Gastrocnemius medialis (tissue), 4 donors: ENCODE measurements at regions of chr5 and their contacts with region 1.

Region 1: DNA sequence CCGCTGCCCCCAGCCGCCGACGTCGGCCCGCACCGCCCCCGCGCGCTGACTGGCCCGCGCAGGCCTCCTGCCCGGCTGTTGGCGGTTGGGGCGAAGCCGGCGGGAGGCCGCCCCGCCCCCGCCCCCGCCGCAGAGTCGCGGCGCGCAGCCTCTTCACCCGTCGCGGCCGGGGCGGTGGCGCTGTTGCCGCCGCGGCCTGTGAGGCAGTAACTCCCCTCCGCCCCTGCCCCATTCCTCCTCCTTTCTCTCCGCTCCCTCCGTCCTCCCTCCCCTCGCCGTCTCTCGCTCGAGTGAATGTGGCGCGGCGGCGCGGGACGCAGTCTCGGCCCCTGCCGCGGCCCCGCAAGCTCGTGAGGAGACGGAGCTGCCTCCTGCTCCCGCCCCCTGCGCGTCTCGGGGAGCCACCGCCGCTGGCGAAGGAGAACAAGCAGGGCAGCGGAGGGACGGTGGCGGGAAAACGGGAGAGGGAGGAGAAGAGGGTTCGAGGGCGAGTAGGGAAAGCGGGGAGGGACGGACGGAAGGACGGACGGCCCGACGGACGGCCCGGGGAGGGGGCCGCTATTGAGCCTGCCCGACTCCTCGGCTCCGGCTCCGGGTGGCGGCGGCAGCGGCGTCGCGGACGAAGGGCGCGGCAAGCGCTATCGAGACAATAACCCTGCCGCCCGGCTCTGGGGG is 637 bp upstream of the ERBIN start:
- DNase-seq: peak; percentile 69 to 79
- ATAC-seq: peak; percentile 69
- H3K4me3 ChIP-seq: peak overlapping the region; percentile 85 to 95 (median 92)
- H3K27ac ChIP-seq: peak overlapping the region; percentile 97 to 100 (median 99)
- H3K4me1 ChIP-seq: peaks cover 18% of the 10 kb centered on the region in 2 donors
- H3K27me3 ChIP-seq: no peaks in the 10 kb centered on the region
- CTCF ChIP-seq: peak in 4 of 5 experiments; percentile 41 to 50 (median 44)
- POLR2A ChIP-seq: peak; percentile 93 to 95

Region 2: DNA sequence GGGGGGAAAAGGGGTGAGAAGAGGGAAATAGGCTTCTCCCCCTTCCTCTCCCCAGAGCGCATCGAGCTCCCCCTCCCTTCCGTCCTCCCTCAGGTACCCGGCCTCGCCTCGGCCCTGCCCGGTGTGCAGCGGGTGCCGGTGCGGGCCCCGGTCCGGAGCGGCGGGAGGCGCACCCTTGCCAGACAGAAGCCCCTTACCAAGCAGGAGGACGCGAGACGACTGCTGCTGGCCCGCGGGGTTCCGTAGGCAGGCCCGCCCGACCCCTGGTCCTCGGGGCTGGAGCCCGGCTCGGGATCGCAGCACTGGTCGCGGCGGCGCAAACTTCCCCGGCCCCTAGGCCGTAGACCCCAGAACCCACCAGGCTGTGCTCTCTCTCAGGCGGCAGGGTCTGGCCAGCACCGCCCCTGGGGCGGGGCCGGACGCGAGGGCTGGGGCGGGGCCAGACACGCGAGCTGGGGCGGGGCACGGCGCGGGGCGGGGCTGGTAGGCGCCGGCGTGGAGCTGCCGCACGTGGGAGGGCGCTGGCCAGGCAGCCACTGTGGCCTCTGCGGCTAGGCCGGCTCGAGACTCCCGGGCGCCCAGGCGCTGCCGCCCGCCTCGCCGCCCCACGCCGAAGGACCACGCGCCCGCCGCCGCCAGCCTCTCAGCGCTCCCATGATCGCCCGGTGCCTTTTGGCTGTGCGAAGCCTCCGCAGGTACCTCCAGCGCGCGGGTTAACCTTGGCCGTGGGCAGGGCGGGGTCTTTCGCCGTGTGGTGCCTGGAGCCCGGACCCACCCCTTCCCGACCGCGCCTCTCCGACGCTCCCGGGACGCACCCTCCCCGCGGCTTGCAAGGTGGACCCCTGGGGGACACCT is 203.8 kb before region 1 on chr5 and contains the starts of genes NLN and SGTB:
- in situ Hi-C with region 1: no loop called
- intact Hi-C with region 1: loop called (anchors 2 kb)
- DNase-seq: peak; percentile 74 to 79
- ATAC-seq: peak; percentile 86 to 91
- H3K4me3 ChIP-seq: peak within 1 kb of the TSS; percentile 88 to 100 (median 93)
- H3K27ac ChIP-seq: peak within 1 kb of the TSS; percentile 85 to 90 (median 88)
- H3K4me1 ChIP-seq: peaks cover 28 to 52% of the 10 kb centered on the region in 2 donors
- H3K27me3 ChIP-seq: no peaks in the 10 kb centered on the region
- CTCF ChIP-seq: no peak
- POLR2A ChIP-seq: peak; percentile 63 to 72
- total RNA-seq, gene NLN: 20.4 to 29.9 (median 27.9) TPM
- total RNA-seq, gene SGTB: 3.6 to 6.6 (median 4.3) TPM

Region 3: GRCh38 chr5:65790371-65791163 is 135.2 kb before region 1 on chr5:
- in situ Hi-C with region 1: no loop called
- intact Hi-C with region 1: loop called (anchors 5 kb)
- DNase-seq: no peak
- ATAC-seq: no peak
- H3K4me3 ChIP-seq: no peak overlapping the region
- H3K27ac ChIP-seq: peak overlapping the region in 1 of 4 donors; percentile 41
- H3K4me1 ChIP-seq: no peaks in the 10 kb centered on the region
- H3K27me3 ChIP-seq: no peaks in the 10 kb centered on the region
- CTCF ChIP-seq: no peak
- POLR2A ChIP-seq: no peak

Region 4: GRCh38 chr5:65809817-65810531 is 115.8 kb before region 1 on chr5:
- in situ Hi-C with region 1: no loop called
- intact Hi-C with region 1: no loop called
- DNase-seq: no peak
- ATAC-seq: no peak
- H3K4me3 ChIP-seq: no peak overlapping the region
- H3K27ac ChIP-seq: no peak overlapping the region
- H3K4me1 ChIP-seq: no peaks in the 10 kb centered on the region
- H3K27me3 ChIP-seq: no peaks in the 10 kb centered on the region
- CTCF ChIP-seq: no peak
- POLR2A ChIP-seq: no peak

Region 5: DNA sequence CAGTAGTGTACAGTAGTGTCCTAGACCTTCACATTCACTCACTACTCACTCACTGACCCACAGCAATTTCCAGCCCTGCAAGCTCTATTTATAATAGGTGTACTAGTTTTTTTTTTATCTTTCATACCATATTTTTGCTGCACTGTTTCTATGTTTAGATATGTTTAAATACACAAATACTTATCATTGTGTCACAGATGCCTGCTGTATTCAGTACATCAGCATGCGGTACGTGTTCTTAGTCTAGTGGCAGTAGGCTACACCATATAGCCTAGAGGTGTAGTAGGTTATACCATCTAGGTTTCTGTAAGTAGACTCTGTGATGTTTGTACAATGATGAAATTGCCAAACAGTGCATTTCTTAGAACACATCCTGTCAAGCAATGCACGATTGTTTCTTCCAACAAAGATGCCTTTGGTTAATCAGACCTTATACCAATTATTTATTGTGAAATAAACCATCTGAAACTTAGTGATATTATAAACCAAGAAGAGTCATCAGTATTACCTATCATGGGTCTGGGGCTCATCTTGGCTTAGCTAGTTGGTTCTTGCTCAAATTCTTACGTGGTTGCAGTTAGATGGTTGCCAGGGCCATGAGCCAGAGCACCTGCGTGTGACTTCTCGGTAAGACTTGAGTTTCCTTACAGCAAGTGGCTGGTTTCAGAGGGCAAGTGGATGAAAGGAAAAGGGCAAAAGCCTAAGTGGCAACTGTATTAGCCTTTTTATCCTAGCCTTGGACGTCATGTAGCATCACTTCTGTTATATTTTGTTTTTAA is 41.7 kb after region 1 on chr5:
- in situ Hi-C with region 1: no loop called
- intact Hi-C with region 1: loop called (anchors 2 kb)
- DNase-seq: peak; percentile 23 to 74
- ATAC-seq: peak; percentile 43 to 67
- H3K4me3 ChIP-seq: no peak overlapping the region
- H3K27ac ChIP-seq: peak overlapping the region; percentile 86 to 89 (median 86)
- H3K4me1 ChIP-seq: peaks cover 83 to 88% of the 10 kb centered on the region in 2 donors
- H3K27me3 ChIP-seq: no peaks in the 10 kb centered on the region
- CTCF ChIP-seq: no peak
- POLR2A ChIP-seq: no peak